Naive thymus-derived CD4-positive, alpha-beta T cell (primary cell): ENCODE measurements at regions of chr6 and their contacts with region 1.

Region 1: GRCh38 chr6:127120787-127121636 is 2.5 kb downstream of the RSPO3 start:
- DNase-seq: peak in 7 of 9 donors; percentile 13 to 72 (median 38)
- ATAC-seq: peak; percentile 80
- H3K4me3 ChIP-seq: no peak overlapping the region
- H3K4me3 Mint-ChIP-seq: peak overlapping the region; percentile 7 to 86 (median 54)
- H3K27ac ChIP-seq: no peak overlapping the region
- H3K27ac Mint-ChIP-seq: no peak overlapping the region
- H3K4me1 ChIP-seq: no peaks in the 10 kb centered on the region
- H3K4me1 Mint-ChIP-seq: peaks cover 16 to 32% (median 20%) of the 10 kb centered on the region in 7 donors
- H3K27me3 ChIP-seq: peaks cover 4 to 15% of the 10 kb centered on the region in 2 donors
- H3K27me3 Mint-ChIP-seq: peaks cover 63 to 76% (median 69%) of the 10 kb centered on the region in 5 donors

Region 2: DNA sequence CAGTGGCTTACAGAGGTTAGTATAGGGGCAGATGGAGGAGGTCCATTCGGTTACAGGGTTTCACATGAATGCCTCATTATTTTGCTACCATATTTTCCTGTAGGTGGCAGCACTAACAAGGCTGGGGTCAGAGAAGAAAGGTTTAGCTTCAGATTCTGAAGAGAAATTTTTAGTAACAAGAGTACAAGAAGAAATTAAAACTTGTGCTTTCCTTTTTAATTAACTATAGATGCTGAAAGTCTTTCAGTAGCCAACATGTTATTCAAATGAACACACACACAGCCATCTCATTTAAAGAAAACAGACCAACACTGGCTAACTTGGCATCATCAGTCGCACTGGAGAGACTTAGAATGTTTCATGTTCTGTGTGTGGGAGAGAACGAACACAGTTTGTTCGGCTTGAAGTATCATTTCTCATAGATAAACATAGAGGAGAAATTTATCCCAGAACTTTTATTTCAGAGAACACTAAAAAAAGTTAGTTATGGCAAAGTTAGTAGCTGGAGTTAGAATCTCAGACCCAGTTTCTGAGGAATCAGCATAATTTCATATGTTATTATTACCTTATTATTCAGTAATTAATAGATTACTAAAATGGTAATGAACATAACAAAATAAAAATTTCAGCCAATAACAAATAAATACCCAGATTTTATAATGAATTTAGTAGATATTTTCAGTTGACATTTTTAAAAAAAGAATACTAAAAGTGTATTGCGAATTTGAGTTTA is 316.5 kb before region 1 on chr6:
- CTCF ChIA-PET with region 1: no interaction called
- POLR2A ChIA-PET with region 1: no interaction called
- intact Hi-C with region 1: loop called in 1 of 2 experiments (anchors 1 kb)
- DNase-seq: no peak
- ATAC-seq: no peak
- H3K4me3 ChIP-seq: no peak overlapping the region
- H3K4me3 Mint-ChIP-seq: no peak overlapping the region
- H3K27ac ChIP-seq: no peak overlapping the region
- H3K27ac Mint-ChIP-seq: no peak overlapping the region
- H3K4me1 ChIP-seq: no peaks in the 10 kb centered on the region
- H3K4me1 Mint-ChIP-seq: no peaks in the 10 kb centered on the region
- H3K27me3 ChIP-seq: no peaks in the 10 kb centered on the region
- H3K27me3 Mint-ChIP-seq: peaks cover 0 to 9% (median 6%) of the 10 kb centered on the region in 5 donors